A673 (cell line): ENCODE measurements at regions of chr12 and their contacts with region 1.

Region 1: GRCh38 chr12:65319688-65320200 is 41.3 kb downstream of the MSRB3 start:
- DNase-seq: no peak
- H3K4me3 ChIP-seq: no peak overlapping the region
- H3K27ac ChIP-seq: no peak overlapping the region
- H3K4me1 ChIP-seq: peaks cover 12% of the 10 kb centered on the region
- H3K27me3 ChIP-seq: no peaks in the 10 kb centered on the region
- CTCF ChIP-seq: no peak

Region 2: DNA sequence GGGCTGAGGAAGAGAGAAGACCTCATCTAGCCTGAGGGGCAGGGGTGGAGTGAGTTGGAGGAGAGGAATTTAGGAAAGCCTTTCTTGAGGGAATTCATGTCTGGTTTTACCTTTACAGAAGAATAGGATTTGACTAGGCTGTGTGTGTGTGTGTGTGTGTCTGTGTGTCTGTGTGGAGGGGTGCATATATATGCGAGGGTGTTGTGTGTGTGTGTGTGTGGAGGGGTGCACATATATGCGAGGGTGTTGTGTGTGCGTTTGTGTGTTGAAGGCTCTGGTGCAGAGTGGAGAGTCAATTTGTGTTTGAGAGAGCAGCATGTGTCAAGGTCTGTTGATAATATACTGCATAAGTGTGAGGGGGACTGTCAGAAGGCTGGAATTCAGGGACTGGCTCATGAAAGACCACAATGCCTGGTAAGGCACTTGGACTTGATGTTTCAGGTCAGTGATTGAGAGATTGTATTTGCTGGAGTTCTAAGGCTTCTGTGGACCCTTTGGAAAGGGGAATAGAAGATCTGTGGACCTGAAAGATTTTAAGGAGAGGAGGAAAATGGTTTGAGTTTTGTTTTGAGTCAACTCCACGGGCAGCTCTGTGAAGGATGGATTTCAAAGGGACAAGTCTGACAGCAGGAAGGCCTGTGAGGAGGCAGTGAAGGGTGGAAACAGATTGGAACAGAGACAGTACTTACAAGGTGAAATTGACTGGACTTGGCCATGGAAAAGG is 460.7 kb before region 1 on chr12:
- CTCF ChIA-PET with region 1: no interaction called
- POLR2A ChIA-PET with region 1: no interaction called
- intact Hi-C with region 1: no loop called
- DNase-seq: no peak
- H3K4me3 ChIP-seq: no peak overlapping the region
- H3K27ac ChIP-seq: no peak overlapping the region
- H3K4me1 ChIP-seq: no peaks in the 10 kb centered on the region
- H3K27me3 ChIP-seq: peaks cover 31% of the 10 kb centered on the region
- CTCF ChIP-seq: no peak

Region 3: DNA sequence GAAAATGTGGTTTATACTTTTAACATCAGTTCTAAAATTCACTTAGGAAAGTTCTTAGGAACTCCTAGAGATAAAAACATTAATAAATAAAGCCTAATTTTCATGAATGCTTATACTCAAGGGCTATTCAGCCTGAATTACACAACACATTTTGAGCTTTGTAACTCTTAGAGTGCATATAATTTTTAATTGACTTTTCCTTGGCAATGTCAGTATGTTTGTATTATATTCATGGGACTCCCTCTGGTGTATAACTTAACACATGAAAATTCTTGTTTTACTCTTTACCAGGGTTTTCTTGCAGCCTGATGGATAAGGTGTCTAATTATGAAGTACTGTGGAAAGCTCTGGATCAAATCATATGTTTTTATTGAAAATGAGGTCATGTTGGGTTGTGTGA is 354.0 kb after region 1 on chr12:
- CTCF ChIA-PET with region 1: no interaction called
- POLR2A ChIA-PET with region 1: no interaction called
- intact Hi-C with region 1: loop called (anchors 5 kb)
- DNase-seq: peak; percentile 51
- H3K4me3 ChIP-seq: no peak overlapping the region
- H3K27ac ChIP-seq: no peak overlapping the region
- H3K4me1 ChIP-seq: peaks cover 5% of the 10 kb centered on the region
- H3K27me3 ChIP-seq: no peaks in the 10 kb centered on the region
- CTCF ChIP-seq: peak; percentile 55